ENCODE measurements at regions of chr10 and their contacts with region 1.

Region 1: DNA sequence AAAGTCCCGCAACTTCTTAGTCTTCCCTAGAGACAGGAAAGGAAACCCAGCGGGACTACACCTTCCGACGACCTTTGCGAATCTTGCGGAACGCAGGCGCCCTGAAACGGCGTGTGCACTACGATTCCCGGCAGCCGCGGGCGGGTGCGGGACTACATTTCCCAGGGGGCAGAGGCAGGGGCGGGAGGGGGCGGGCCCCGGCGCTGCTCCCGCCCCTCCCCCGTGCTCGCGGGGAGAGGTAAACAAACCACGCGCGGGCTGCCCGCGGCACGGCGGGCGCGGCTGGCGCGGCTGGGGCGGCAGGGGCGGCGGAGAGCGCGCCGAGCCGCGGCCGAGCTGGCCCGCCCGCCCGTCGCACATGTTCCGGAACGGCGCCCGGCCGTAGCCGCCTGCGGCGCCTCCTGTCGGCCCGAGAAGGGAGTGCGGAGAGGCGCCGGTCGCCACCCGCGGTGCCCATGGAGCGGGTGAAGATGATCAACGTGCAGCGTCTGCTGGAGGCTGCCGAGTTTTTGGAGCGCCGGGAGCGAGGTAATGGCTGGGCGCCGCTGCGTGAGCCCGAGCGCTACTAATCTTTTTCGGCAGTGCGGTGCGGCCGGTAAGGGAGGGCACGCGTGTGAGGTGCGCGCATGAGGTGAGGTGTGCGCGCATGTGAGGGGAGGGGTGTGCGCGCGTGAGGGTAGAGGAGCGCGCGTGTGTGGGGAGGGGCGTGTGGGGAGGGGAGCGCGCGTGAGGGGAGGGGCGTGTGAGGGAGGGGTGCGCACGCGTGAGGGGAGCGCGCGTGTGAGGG is 18.5 kb downstream of the MXI1 start:
- DNase-seq: peak; percentile 79 to 95 (median 88)
- ATAC-seq: peak; percentile 54
- H3K4me3 ChIP-seq: peak overlapping the region; percentile 88 to 91
- H3K4me3 Mint-ChIP-seq: peak overlapping the region; percentile 95
- H3K27ac ChIP-seq: peak overlapping the region; percentile 78 to 79
- H3K27ac Mint-ChIP-seq: peak overlapping the region; percentile 94
- H3K4me1 ChIP-seq: peaks cover 22% of the 10 kb centered on the region
- H3K4me1 Mint-ChIP-seq: peaks cover 34% of the 10 kb centered on the region
- H3K27me3 ChIP-seq: peaks cover 0 to 2% of the 10 kb centered on the region in 2 experiments
- H3K27me3 Mint-ChIP-seq: peaks cover 9% of the 10 kb centered on the region
- CTCF ChIP-seq: peak; percentile 50

Region 2: GRCh38 chr10:109556399-109556798 is 669.5 kb before region 1 on chr10:
- CTCF ChIA-PET with region 1: no interaction called
- POLR2A ChIA-PET with region 1: no interaction called
- intact Hi-C with region 1: no loop called
- DNase-seq: no peak
- ATAC-seq: no peak
- H3K4me3 ChIP-seq: no peak overlapping the region
- H3K4me3 Mint-ChIP-seq: no peak overlapping the region
- H3K27ac ChIP-seq: no peak overlapping the region
- H3K27ac Mint-ChIP-seq: no peak overlapping the region
- H3K4me1 ChIP-seq: no peaks in the 10 kb centered on the region
- H3K4me1 Mint-ChIP-seq: no peaks in the 10 kb centered on the region
- H3K27me3 ChIP-seq: no peaks in the 10 kb centered on the region
- H3K27me3 Mint-ChIP-seq: peaks cover 3% of the 10 kb centered on the region
- CTCF ChIP-seq: no peak

Region 3: GRCh38 chr10:110137142-110137545 is 88.8 kb before region 1 on chr10:
- CTCF ChIA-PET with region 1: interaction called, 13 read pairs
- POLR2A ChIA-PET with region 1: interaction called, 6 read pairs
- intact Hi-C with region 1: loop called (anchors 1 kb)
- DNase-seq: peak in 2 of 9 experiments; percentile 67 to 79
- ATAC-seq: peak; percentile 74
- H3K4me3 ChIP-seq: no peak overlapping the region
- H3K4me3 Mint-ChIP-seq: no peak overlapping the region
- H3K27ac ChIP-seq: peak overlapping the region in 1 of 2 experiments; percentile 2
- H3K27ac Mint-ChIP-seq: peak overlapping the region; percentile 23
- H3K4me1 ChIP-seq: peaks cover 9% of the 10 kb centered on the region
- H3K4me1 Mint-ChIP-seq: peaks cover 21% of the 10 kb centered on the region
- H3K27me3 ChIP-seq: no peaks in the 10 kb centered on the region
- H3K27me3 Mint-ChIP-seq: no peaks in the 10 kb centered on the region
- CTCF ChIP-seq: peak; percentile 97

Region 4: DNA sequence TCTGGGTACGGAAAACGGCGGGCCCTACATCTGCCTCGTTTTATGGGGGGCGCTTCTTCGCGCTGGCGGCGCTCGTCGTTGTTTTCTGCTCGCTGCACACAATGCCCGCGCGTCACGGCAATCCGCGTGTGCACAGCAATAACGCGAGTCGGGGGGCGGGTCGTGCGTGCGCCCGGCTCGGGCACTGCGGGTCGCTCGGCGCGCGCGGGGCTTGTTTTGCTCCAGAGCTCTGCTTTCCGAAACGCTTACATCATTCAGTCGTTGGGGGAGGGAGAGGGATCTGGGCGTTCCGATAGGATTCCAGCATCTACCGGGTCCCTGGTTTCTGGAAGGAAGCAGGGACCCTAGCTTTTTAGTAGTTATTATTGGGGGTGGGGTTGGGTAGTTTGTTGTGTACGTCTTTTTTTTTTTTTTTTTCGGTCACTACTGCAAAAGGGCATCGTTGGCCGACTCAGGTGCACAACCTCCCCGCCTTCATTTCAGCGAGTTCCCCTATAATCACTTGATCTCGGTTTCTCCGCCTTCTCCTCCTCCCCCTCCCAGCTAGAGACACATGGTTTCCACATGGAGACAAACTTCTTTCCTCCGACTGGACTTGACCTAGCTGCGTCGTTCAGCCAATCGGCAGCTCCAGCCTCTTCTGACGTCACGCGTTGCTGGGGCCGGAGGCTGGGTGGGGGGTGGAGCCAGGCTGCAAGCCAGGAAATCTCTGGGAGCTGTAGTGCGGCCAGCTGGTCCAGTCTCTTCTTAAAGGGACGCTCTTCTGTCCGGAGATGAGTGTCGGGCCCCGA is 15.1 kb before region 1 on chr10:
- CTCF ChIA-PET with region 1: interaction called, 87 read pairs
- POLR2A ChIA-PET with region 1: interaction called, 77 read pairs
- intact Hi-C with region 1: loop called (anchors 1 kb)
- DNase-seq: peak; percentile 77 to 94 (median 90)
- ATAC-seq: peak; percentile 48
- H3K4me3 ChIP-seq: peak overlapping the region; percentile 59 to 91
- H3K4me3 Mint-ChIP-seq: peak overlapping the region; percentile 94
- H3K27ac ChIP-seq: peak overlapping the region; percentile 60 to 90
- H3K27ac Mint-ChIP-seq: peak overlapping the region; percentile 99
- H3K4me1 ChIP-seq: peaks cover 22% of the 10 kb centered on the region
- H3K4me1 Mint-ChIP-seq: peaks cover 47% of the 10 kb centered on the region
- H3K27me3 ChIP-seq: peaks cover 0 to 13% of the 10 kb centered on the region in 2 experiments
- H3K27me3 Mint-ChIP-seq: peaks cover 17% of the 10 kb centered on the region
- CTCF ChIP-seq: no peak

Region 5: DNA sequence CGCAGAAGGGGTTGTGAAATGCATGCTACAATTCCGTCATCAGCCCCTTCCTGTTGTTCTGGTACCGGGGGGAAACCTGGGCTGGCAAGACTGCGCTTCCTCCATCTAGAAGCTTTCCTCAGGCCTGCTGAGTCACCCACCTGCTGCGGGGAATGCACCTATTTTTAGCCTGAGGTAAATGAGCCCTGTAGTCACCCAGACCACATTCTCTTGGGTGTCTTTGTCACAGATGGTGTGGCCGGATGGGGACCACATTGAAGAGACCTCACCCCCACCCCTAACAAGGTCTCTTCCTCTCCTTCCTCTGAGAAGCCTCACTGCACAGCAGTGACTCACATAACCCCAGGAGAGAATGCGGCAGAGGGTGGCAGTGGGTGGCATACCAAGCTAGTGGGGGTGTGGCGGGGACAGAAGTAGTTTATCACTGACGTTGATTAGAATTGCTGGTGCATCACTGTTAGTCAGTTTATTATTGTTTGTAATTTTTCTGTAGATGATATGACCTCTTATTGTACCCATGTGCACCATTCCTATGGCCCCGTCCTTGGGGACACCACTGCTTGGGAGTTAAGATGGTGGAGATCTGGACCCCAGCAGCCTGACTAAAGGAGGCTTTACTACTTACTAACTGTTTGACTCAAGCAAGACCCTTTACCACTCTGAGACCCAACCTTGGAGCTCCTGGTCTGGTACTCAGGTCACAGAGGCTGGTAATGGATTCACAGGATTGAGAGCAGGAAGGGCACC is 188.8 kb after region 1 on chr10:
- CTCF ChIA-PET with region 1: no interaction called
- POLR2A ChIA-PET with region 1: no interaction called
- intact Hi-C with region 1: loop called in 1 of 2 experiments (anchors 10 kb)
- DNase-seq: peak; percentile 66 to 97 (median 86)
- ATAC-seq: peak; percentile 95
- H3K4me3 ChIP-seq: no peak overlapping the region
- H3K4me3 Mint-ChIP-seq: peak overlapping the region; percentile 33
- H3K27ac ChIP-seq: peak overlapping the region in 1 of 2 experiments; percentile 38
- H3K27ac Mint-ChIP-seq: peak overlapping the region; percentile 82
- H3K4me1 ChIP-seq: peaks cover 26% of the 10 kb centered on the region
- H3K4me1 Mint-ChIP-seq: peaks cover 29% of the 10 kb centered on the region
- H3K27me3 ChIP-seq: no peaks in the 10 kb centered on the region
- H3K27me3 Mint-ChIP-seq: peaks cover 2% of the 10 kb centered on the region
- CTCF ChIP-seq: no peak

Region 6: GRCh38 chr10:110547139-110547761 is 321.3 kb after region 1 on chr10:
- CTCF ChIA-PET with region 1: no interaction called
- POLR2A ChIA-PET with region 1: no interaction called
- intact Hi-C with region 1: loop called in 1 of 2 experiments (anchors 1 kb)
- DNase-seq: peak in 2 of 9 experiments; percentile 66 to 79
- ATAC-seq: peak; percentile 88
- H3K4me3 ChIP-seq: no peak overlapping the region
- H3K4me3 Mint-ChIP-seq: no peak overlapping the region
- H3K27ac ChIP-seq: no peak overlapping the region
- H3K27ac Mint-ChIP-seq: no peak overlapping the region
- H3K4me1 ChIP-seq: no peaks in the 10 kb centered on the region
- H3K4me1 Mint-ChIP-seq: peaks cover 4% of the 10 kb centered on the region
- H3K27me3 ChIP-seq: no peaks in the 10 kb centered on the region
- H3K27me3 Mint-ChIP-seq: peaks cover 16% of the 10 kb centered on the region
- CTCF ChIP-seq: peak; percentile 92

Region 7: GRCh38 chr10:110871298-110872084 is 645.5 kb after region 1 on chr10 and contains the start of gene PDCD4:
- CTCF ChIA-PET with region 1: no interaction called
- POLR2A ChIA-PET with region 1: no interaction called
- intact Hi-C with region 1: loop called in 1 of 2 experiments (anchors 5 kb)
- DNase-seq: peak; percentile 87 to 96 (median 94)
- ATAC-seq: peak; percentile 58
- H3K4me3 ChIP-seq: peak within 1 kb of the TSS; percentile 55 to 85
- H3K4me3 Mint-ChIP-seq: peak within 1 kb of the TSS; percentile 89
- H3K27ac ChIP-seq: peak within 1 kb of the TSS; percentile 78 to 97
- H3K27ac Mint-ChIP-seq: peak within 1 kb of the TSS; percentile 98
- H3K4me1 ChIP-seq: peaks cover 71% of the 10 kb centered on the region
- H3K4me1 Mint-ChIP-seq: peaks cover 67% of the 10 kb centered on the region
- H3K27me3 ChIP-seq: no peaks in the 10 kb centered on the region
- H3K27me3 Mint-ChIP-seq: no peaks in the 10 kb centered on the region
- CTCF ChIP-seq: no peak
- total RNA-seq, gene PDCD4: 672 to 688 TPM

Region 8: DNA sequence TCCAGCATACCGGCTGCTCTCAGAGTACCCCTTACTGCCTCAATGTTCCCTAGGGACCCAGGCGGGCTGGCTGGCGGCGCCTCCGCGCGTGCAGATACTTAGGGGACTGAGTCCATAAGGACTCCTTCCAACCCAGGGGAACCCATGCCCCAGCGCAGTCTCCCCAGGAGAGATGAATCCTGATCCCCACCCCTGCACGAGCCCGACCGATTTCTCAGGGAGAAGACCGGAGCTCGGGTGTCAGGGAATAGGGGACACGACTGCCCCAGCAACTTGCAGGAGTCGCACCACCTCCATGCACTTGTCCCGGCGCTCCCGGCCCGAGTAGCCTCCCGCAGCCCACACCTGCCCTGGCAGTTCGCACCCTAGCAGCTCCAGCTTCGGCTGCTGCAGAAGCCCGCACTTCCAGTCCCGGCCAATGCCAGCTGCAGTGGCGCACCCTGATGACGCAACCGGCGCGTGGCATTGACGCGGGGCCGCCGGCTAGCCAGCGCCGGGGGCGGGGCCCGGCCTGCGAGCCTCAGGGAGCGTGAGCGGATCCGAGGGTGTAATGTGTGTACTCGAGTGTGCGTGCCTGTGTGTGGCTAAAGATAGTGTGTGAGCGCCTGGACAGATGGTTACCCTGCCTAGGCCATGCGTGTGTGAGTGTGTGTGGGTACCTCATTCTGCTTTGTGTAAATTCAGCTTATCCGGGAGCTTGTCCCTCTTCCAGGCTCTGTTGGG is 1957.5 kb after region 1 on chr10 and contains the start of gene GPAM:
- CTCF ChIA-PET with region 1: no interaction called
- POLR2A ChIA-PET with region 1: no interaction called
- intact Hi-C with region 1: loop called in 1 of 2 experiments (anchors 5 kb)
- DNase-seq: peak; percentile 95 to 100 (median 99)
- ATAC-seq: peak; percentile 98
- H3K4me3 ChIP-seq: peak within 1 kb of the TSS; percentile 65 to 92
- H3K4me3 Mint-ChIP-seq: peak within 1 kb of the TSS; percentile 87
- H3K27ac ChIP-seq: peak within 1 kb of the TSS; percentile 76 to 78
- H3K27ac Mint-ChIP-seq: peak within 1 kb of the TSS; percentile 93
- H3K4me1 ChIP-seq: peaks cover 17% of the 10 kb centered on the region
- H3K4me1 Mint-ChIP-seq: peaks cover 28% of the 10 kb centered on the region
- H3K27me3 ChIP-seq: no peaks in the 10 kb centered on the region
- H3K27me3 Mint-ChIP-seq: no peaks in the 10 kb centered on the region
- CTCF ChIP-seq: no peak
- total RNA-seq, gene GPAM: 3.2 to 4.2 TPM

Measured in CD8-positive, alpha-beta T cell (primary cell).